ENCODE measurements at regions of chr14 and their contacts with region 1.

Region 1: GRCh38 chr14:60164712-60165546 is at the start of gene DHRS7:
- DNase-seq: peak; percentile 99
- ATAC-seq: peak; percentile 95
- H3K4me3 ChIP-seq: peak within 1 kb of the TSS; percentile 75
- H3K27ac ChIP-seq: peak within 1 kb of the TSS; percentile 61
- H3K4me1 ChIP-seq: peaks cover 34% of the 10 kb centered on the region
- H3K27me3 ChIP-seq: no peaks in the 10 kb centered on the region
- CTCF ChIP-seq: peak; percentile 85
- total RNA-seq, gene DHRS7: 236 and 266 TPM in 2 replicates

Region 2: DNA sequence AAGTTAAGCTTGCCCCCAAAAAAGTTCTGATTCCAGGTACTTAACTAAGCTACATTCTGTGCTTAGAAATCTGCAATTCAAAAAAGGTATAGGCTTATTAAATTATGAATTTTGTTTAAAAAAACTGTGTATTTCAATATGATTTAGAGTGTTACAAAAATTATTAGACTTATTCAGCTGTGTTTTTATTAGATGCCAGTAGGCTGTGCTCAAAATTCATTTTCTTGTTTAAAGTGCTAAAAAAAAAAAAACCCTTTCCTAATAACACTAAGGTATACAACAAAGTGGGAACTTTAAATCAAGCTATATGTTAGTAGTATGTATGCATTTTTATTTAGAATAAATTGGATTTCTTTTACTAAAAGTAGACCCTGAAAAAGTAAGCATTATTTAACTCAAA is 220.0 kb before region 1 on chr14:
- CTCF ChIA-PET with region 1: no interaction called
- POLR2A ChIA-PET with region 1: no interaction called
- intact Hi-C with region 1: loop called (anchors 5 kb)
- DNase-seq: no peak
- ATAC-seq: no peak; the same call in 1 of the 2 replicates
- H3K4me3 ChIP-seq: no peak overlapping the region
- H3K27ac ChIP-seq: no peak overlapping the region
- H3K4me1 ChIP-seq: no peaks in the 10 kb centered on the region
- H3K27me3 ChIP-seq: peaks cover 17% of the 10 kb centered on the region
- CTCF ChIP-seq: peak; percentile 52

Region 3: GRCh38 chr14:59964251-59965007 is 200.5 kb before region 1 on chr14:
- CTCF ChIA-PET with region 1: interaction called, 11 read pairs
- POLR2A ChIA-PET with region 1: no interaction called
- intact Hi-C with region 1: loop called (anchors 1 kb)
- DNase-seq: peak; percentile 70
- ATAC-seq: peak; percentile 66
- H3K4me3 ChIP-seq: no peak overlapping the region
- H3K27ac ChIP-seq: no peak overlapping the region
- H3K4me1 ChIP-seq: peaks cover 18% of the 10 kb centered on the region
- H3K27me3 ChIP-seq: peaks cover 23% of the 10 kb centered on the region
- CTCF ChIP-seq: no peak

Region 4: GRCh38 chr14:60051721-60052221 is 113.2 kb before region 1 on chr14:
- CTCF ChIA-PET with region 1: no interaction called
- POLR2A ChIA-PET with region 1: no interaction called
- intact Hi-C with region 1: no loop called
- DNase-seq: no peak
- ATAC-seq: no peak; the same call in 1 of the 2 replicates
- H3K4me3 ChIP-seq: no peak overlapping the region
- H3K27ac ChIP-seq: no peak overlapping the region
- H3K4me1 ChIP-seq: no peaks in the 10 kb centered on the region
- H3K27me3 ChIP-seq: peaks cover 4% of the 10 kb centered on the region; the same call in 1 of the 2 replicates
- CTCF ChIP-seq: no peak

Region 5: GRCh38 chr14:60091550-60092530 is 73.1 kb before region 1 on chr14 and contains the start of gene PCNX4:
- CTCF ChIA-PET with region 1: no interaction called
- POLR2A ChIA-PET with region 1: interaction called, 7 read pairs
- intact Hi-C with region 1: loop called (anchors 1 kb)
- DNase-seq: peak; percentile 100
- ATAC-seq: peak; percentile 93
- H3K4me3 ChIP-seq: peak within 1 kb of the TSS; percentile 76
- H3K27ac ChIP-seq: peak within 1 kb of the TSS; percentile 85
- H3K4me1 ChIP-seq: peaks cover 42% of the 10 kb centered on the region
- H3K27me3 ChIP-seq: no peaks in the 10 kb centered on the region
- CTCF ChIP-seq: no peak
- total RNA-seq, gene PCNX4: 117 and 151 TPM in 2 replicates

Region 6: DNA sequence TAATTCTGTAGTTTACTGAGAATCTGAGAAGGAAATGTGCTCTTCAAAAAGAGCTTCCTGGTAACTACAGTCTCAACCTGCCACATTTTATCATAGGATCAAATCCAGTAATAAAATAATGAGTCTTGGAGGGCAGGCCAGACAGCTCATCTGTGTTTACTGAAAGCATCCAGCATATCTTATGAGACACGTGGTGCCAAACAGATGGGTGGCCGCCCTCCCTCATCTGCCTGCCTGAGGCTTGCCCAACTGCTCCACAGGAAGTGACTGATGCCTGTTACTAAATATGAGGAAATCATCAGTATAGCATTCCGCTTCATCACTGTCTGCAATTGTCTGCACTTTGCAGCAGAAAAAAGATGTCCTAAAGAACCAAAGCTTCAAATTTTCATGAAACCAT is 13.2 kb before region 1 on chr14:
- CTCF ChIA-PET with region 1: no interaction called
- POLR2A ChIA-PET with region 1: no interaction called
- intact Hi-C with region 1: loop called (anchors 1 kb)
- DNase-seq: peak; percentile 100
- ATAC-seq: peak; percentile 100
- H3K4me3 ChIP-seq: no peak overlapping the region
- H3K27ac ChIP-seq: peak overlapping the region; percentile 55
- H3K4me1 ChIP-seq: peaks cover 24% of the 10 kb centered on the region
- H3K27me3 ChIP-seq: no peaks in the 10 kb centered on the region
- CTCF ChIP-seq: no peak

Region 7: DNA sequence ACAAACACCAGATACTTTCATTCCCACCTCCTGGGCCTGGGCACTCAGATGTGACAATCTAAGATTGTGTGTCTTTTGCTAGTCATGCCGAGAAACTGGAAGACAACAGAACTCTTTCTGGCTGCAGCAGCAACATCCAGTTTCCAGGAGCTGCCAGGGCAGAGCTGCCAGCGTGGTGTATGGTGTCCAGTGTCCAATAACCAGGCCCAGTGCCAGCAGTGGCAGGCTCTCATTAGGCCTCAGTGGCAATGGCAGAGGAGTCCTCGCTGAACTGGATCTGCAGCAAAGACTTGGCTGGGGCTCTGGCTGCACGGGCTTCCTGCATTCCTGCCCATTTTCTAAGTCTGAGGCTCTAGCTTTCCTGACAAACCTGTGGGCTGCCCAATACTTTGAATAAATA is 57.9 kb after region 1 on chr14:
- CTCF ChIA-PET with region 1: no interaction called
- POLR2A ChIA-PET with region 1: no interaction called
- intact Hi-C with region 1: no loop called
- DNase-seq: peak; percentile 96
- ATAC-seq: peak; percentile 91
- H3K4me3 ChIP-seq: no peak overlapping the region
- H3K27ac ChIP-seq: no peak overlapping the region
- H3K4me1 ChIP-seq: peaks cover 9% of the 10 kb centered on the region
- H3K27me3 ChIP-seq: no peaks in the 10 kb centered on the region
- CTCF ChIP-seq: no peak

Measured in PC-3 (cell line).